ENCODE measurements at regions of chrX and their contacts with region 1.

Region 1: DNA sequence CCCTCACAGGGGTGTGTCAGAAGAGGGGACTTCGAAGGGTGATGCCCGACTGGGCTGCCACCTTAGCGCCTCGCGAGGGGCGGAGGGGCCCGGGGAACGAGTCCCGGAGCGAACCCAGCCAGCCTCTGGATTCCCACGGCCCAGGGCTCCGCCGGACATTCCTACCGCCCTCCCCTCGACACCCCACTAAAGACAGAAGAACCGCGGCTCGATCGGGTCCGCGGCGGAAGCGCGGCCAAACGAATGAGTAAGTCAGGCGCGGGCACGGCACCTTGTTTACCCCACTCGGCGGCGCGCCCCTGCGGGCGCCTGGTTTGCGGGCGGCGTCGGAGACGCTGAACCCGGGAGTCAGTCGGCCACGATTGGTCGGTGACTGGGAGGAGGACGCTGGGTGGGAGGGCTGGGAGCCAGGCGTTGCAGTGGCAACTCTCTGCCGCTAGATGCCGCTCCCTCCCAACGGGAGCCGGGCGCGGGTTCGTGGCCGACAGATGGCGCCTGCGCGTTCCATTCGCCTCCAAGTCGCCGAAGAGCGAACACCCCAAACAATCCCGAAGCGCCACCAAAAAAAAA is 1.4 kb upstream of the STAG2 start:
- DNase-seq: peak; percentile 88
- H3K4me3 ChIP-seq: peak overlapping the region; percentile 52 to 73 (median 67)
- H3K27ac ChIP-seq: peak overlapping the region; percentile 82
- H3K4me1 ChIP-seq: no peaks in the 10 kb centered on the region
- H3K27me3 ChIP-seq: no peaks in the 10 kb centered on the region
- CTCF ChIP-seq: peak; percentile 31 to 86

Region 2: DNA sequence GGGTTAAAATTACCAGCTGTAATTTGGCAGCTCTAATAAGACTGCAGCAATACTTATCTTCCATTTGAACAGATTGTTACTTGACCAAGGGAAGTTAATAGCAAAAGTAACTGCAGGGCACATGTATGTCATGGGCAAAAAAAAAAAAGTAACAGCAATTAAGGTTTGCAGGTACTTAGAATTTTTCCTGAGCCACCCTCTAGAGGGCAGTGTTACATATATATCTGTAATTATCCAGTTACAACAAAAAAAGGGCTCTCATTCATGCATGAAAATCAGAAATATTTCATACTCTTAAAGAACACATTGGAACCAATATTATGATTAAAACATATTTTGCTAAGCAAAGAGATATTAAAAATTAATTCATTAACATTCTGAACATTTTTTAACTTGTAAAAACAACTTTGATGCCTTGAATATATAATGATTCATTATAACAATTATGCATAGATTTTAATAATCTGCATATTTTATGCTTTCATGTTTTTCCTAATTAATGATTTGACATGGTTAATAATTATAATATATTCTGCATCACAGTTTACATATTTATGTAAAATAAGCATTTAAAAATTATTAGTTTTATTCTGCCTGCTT is 75.2 kb before region 1 on chrX:
- CTCF ChIA-PET with region 1: no interaction called
- dilution Hi-C with region 1: no loop called
- in situ Hi-C with region 1: no loop called
- intact Hi-C with region 1: loop called (anchors 10 kb)
- DNase-seq: peak; percentile 30
- H3K4me3 ChIP-seq: no peak overlapping the region
- H3K27ac ChIP-seq: no peak overlapping the region
- H3K4me1 ChIP-seq: no peaks in the 10 kb centered on the region
- H3K27me3 ChIP-seq: no peaks in the 10 kb centered on the region
- CTCF ChIP-seq: peak; percentile 56

Region 3: DNA sequence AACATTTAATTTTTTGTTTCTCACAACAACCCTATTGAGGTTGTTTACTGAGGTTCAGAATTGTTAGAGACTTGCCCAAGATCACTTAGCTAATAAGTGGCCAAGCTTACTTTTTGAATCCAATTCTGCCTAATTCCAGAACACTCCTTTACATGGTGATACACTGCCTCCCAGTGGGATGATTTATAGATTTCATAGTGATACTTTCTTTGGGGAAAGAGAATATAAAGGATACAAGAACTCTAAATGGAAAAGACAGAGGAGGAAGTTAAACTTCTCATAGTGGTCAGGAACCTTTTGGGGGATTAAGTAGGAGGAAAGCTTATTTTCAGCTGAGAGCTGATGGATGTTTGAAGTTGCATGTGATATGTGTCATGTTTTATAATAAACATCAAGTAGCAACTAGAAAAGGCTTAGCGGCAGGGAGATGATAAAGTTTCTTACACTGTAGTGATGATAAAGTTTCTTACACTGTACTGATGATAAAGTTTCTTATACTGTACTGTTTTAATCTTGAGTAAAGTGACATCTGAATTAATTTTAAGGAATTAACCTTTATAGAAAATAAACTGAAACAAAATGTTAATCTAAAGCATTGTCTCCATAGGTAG is 16.7 kb after region 1 on chrX:
- CTCF ChIA-PET with region 1: interaction called, 3 read pairs
- dilution Hi-C with region 1: no loop called
- in situ Hi-C with region 1: no loop called
- intact Hi-C with region 1: loop called (anchors 1 kb)
- DNase-seq: peak; percentile 38
- H3K4me3 ChIP-seq: no peak overlapping the region
- H3K27ac ChIP-seq: no peak overlapping the region
- H3K4me1 ChIP-seq: no peaks in the 10 kb centered on the region
- H3K27me3 ChIP-seq: no peaks in the 10 kb centered on the region
- CTCF ChIP-seq: peak; percentile 16 to 39

Region 4: DNA sequence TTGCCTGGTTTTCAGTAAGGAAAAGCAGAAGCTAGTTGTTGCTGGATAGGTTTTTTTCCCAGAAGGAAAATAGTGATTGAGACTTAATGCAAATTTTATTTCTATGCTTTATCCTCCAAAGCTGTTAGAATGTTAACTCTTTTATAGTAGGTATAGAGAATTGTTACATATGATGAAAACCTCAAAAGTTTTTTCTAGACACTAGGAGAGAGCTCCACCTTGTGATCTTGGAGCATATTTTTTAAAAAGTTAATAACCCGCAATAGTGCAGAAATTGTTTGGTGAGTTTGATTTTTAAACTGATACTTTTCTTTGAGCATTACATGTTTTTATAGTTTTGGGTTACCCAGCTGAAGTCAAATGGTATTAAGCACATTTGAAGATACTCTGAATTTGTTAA is 57.9 kb after region 1 on chrX:
- CTCF ChIA-PET with region 1: no interaction called
- dilution Hi-C with region 1: no loop called
- in situ Hi-C with region 1: no loop called
- intact Hi-C with region 1: loop called (anchors 2 kb)
- DNase-seq: no peak
- H3K4me3 ChIP-seq: no peak overlapping the region
- H3K27ac ChIP-seq: no peak overlapping the region
- H3K4me1 ChIP-seq: no peaks in the 10 kb centered on the region
- H3K27me3 ChIP-seq: no peaks in the 10 kb centered on the region
- CTCF ChIP-seq: peak; percentile 16 to 21

Region 5: GRCh38 chrX:124211312-124211942 is 251.3 kb after region 1 on chrX:
- CTCF ChIA-PET with region 1: no interaction called
- dilution Hi-C with region 1: no loop called
- in situ Hi-C with region 1: no loop called
- intact Hi-C with region 1: loop called (anchors 2 kb)
- DNase-seq: peak; percentile 44
- H3K4me3 ChIP-seq: no peak overlapping the region
- H3K27ac ChIP-seq: no peak overlapping the region
- H3K4me1 ChIP-seq: peaks cover 4% of the 10 kb centered on the region
- H3K27me3 ChIP-seq: no peaks in the 10 kb centered on the region
- CTCF ChIP-seq: peak; percentile 53 to 72